Astrocyte of the cerebellum (primary cell): ENCODE measurements at regions of chr1 and their contacts with region 1.

Region 1: DNA sequence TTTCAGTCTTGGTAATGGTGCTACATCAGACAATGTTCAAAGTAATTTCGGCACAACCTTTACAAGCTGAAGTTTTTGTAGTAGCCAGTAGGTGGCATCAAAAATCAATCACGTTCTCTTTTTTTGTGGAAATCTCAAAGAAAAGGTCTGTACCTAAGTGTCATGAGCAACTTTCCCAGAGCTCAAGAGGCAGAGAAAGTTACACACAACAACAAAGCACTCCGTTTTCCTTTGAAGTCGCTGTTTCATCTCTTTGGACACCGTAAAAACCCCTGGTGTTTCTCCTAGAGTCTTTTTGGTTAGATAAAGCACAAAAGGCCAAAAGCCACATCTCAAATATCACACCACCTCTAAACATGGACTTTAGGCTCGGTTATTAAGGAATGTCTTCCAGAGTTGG is 131.6 kb downstream of the LHX8 start:
- DNase-seq: peak; percentile 28
- H3K4me3 ChIP-seq: no peak overlapping the region
- CTCF ChIP-seq: peak; percentile 61

Region 2: GRCh38 chr1:75632350-75632949 is 366.7 kb after region 1 on chr1:
- in situ Hi-C with region 1: loop called (anchors 25 kb)
- DNase-seq: peak; percentile 29
- H3K4me3 ChIP-seq: no peak overlapping the region
- CTCF ChIP-seq: peak; percentile 80

Region 3: GRCh38 chr1:75696000-75696399 is 430.2 kb after region 1 on chr1:
- in situ Hi-C with region 1: no loop called
- DNase-seq: no peak
- H3K4me3 ChIP-seq: no peak overlapping the region
- CTCF ChIP-seq: no peak